OCI-LY7 (cell line): ENCODE measurements at regions of chr12 and their contacts with region 1.

Region 1: GRCh38 chr12:12853435-12853834 is 37.9 kb upstream of the GPRC5A start:
- DNase-seq: no peak
- H3K4me3 ChIP-seq: no peak overlapping the region
- H3K27ac ChIP-seq: no peak overlapping the region
- H3K4me1 ChIP-seq: no peaks in the 10 kb centered on the region
- CTCF ChIP-seq: no peak

Region 2: DNA sequence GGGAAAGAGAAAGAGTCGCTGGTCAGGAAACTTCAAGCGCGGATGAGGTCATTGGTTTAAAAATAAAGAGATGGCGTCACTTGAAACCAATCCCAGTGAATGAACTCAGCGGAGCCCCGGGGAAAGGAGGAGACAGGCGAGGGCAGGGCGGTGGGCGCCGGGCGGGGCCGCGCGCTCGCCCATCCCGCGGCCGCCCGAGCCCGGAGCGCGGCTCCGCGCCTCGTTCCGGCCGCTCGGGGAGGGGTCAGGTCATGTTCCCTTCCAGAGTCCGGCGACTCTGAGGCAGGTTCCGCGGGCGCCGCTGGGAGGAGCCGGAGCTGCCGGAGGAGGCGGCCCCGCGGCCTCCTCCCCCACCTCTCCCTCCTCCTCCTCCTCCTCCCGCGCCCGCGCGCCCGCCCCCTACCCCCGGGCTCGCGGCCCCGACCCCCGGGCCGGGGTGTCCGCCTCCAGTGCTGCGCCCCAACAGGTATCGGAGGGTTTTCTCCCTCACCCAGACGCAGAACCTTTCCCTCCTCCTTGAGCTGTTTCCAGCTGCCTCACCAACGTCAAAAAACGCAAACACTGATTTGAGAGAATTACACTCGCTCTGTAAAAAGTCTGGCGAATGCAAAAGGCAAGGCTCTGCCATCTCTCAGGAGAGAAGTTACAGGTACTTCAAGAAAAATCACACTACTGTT is 290.7 kb before region 1 on chr12 and contains the start of gene DUSP16:
- CTCF ChIA-PET with region 1: no interaction called
- POLR2A ChIA-PET with region 1: no interaction called
- intact Hi-C with region 1: no loop called
- DNase-seq: peak; percentile 79
- H3K4me3 ChIP-seq: peak within 1 kb of the TSS; percentile 72
- H3K27ac ChIP-seq: peak within 1 kb of the TSS; percentile 59
- H3K4me1 ChIP-seq: peaks cover 26% of the 10 kb centered on the region
- CTCF ChIP-seq: peak; percentile 17; the same call in 1 of the 2 replicates
- total RNA-seq, gene DUSP16: 2.8 and 3.7 TPM in 2 replicates

Region 3: DNA sequence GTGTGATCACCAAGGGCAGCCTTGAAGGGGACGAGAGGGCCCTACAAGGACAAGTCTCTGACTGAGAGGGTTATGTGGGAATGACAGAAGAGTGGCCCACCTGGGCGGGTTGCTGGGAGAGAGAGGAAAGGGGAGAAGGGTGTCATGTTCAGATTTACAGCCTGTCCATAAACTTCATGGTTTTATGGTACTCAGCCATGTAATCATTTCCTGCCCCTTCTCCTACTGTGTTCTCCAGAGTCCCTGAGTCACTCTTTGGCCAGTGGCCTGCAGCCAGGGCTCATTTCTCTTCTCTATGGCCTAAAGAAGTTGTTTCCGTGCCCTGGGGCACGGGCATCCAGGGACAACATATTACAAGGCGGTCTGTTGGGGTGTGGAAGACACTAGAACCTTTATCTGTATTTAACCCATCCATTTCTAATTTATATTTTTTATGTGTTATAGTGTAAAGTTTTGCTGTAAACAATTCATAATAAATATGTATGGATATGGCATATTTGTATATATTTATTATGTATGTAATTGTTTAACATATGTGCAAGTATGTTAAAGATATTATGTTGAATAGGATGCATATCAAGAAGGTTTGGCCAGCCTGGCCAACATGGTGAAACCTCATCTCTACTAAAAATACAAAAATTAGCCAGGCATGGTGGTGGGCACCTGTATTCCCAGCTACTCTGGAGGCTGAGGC is 13.4 kb before region 1 on chr12:
- CTCF ChIA-PET with region 1: no interaction called
- POLR2A ChIA-PET with region 1: interaction called, 11 read pairs
- intact Hi-C with region 1: no loop called
- DNase-seq: no peak
- H3K4me3 ChIP-seq: no peak overlapping the region
- H3K27ac ChIP-seq: no peak overlapping the region
- H3K4me1 ChIP-seq: no peaks in the 10 kb centered on the region
- CTCF ChIP-seq: no peak